ENCODE measurements at regions of chr10 and their contacts with region 1.

Region 1: GRCh38 chr10:6108603-6109443 is 20.0 kb downstream of the RBM17 start:
- DNase-seq: no peak
- H3K4me3 ChIP-seq: no peak overlapping the region
- H3K27ac ChIP-seq: no peak overlapping the region
- H3K4me1 ChIP-seq: peaks cover 47% of the 10 kb centered on the region
- H3K27me3 ChIP-seq: no peaks in the 10 kb centered on the region
- CTCF ChIP-seq: peak; percentile 79

Region 2: GRCh38 chr10:6202684-6203330 is 94.0 kb after region 1 on chr10 and contains the start of gene PFKFB3:
- intact Hi-C with region 1: loop called (anchors 10 kb)
- DNase-seq: peak; percentile 97
- H3K4me3 ChIP-seq: peak within 1 kb of the TSS; percentile 94
- H3K27ac ChIP-seq: peak within 1 kb of the TSS; percentile 98
- H3K4me1 ChIP-seq: peaks cover 58% of the 10 kb centered on the region
- H3K27me3 ChIP-seq: no peaks in the 10 kb centered on the region
- CTCF ChIP-seq: peak; percentile 99
- total RNA-seq, gene PFKFB3: 14.1 TPM